Heart right ventricle (tissue), 16 donors: ENCODE measurements at regions of chr10 and their contacts with region 1.

Region 1: GRCh38 chr10:72204296-72204695 is 11.5 kb upstream of the ANAPC16 start:
- DNase-seq: no peak
- ATAC-seq: peak in 1 of 8 donors; percentile 41
- H3K4me3 ChIP-seq: no peak overlapping the region
- H3K27ac ChIP-seq: peak overlapping the region in 1 of 10 donors; percentile 26
- H3K4me1 ChIP-seq: peaks cover 0 to 14% (median 0%) of the 10 kb centered on the region in 9 donors
- H3K27me3 ChIP-seq: no peaks in the 10 kb centered on the region
- CTCF ChIP-seq: no peak

Region 2: GRCh38 chr10:72108830-72109631 is 95.3 kb before region 1 on chr10:
- intact Hi-C with region 1: no loop called
- DNase-seq: no peak
- ATAC-seq: peak in 1 of 8 donors; percentile 28
- H3K4me3 ChIP-seq: no peak overlapping the region
- H3K27ac ChIP-seq: peak overlapping the region in 9 of 10 donors; percentile 51 to 81 (median 74)
- H3K4me1 ChIP-seq: peaks cover 7 to 58% (median 33%) of the 10 kb centered on the region in 9 donors
- H3K27me3 ChIP-seq: no peaks in the 10 kb centered on the region
- CTCF ChIP-seq: no peak

Region 3: GRCh38 chr10:72140174-72140573 is 64.1 kb before region 1 on chr10:
- intact Hi-C with region 1: loop called in 1 of 10 experiments (anchors 5 kb)
- DNase-seq: no peak
- ATAC-seq: no peak
- H3K4me3 ChIP-seq: no peak overlapping the region
- H3K27ac ChIP-seq: no peak overlapping the region
- H3K4me1 ChIP-seq: peaks cover 0 to 14% (median 0%) of the 10 kb centered on the region in 9 donors
- H3K27me3 ChIP-seq: no peaks in the 10 kb centered on the region
- CTCF ChIP-seq: no peak

Region 4: DNA sequence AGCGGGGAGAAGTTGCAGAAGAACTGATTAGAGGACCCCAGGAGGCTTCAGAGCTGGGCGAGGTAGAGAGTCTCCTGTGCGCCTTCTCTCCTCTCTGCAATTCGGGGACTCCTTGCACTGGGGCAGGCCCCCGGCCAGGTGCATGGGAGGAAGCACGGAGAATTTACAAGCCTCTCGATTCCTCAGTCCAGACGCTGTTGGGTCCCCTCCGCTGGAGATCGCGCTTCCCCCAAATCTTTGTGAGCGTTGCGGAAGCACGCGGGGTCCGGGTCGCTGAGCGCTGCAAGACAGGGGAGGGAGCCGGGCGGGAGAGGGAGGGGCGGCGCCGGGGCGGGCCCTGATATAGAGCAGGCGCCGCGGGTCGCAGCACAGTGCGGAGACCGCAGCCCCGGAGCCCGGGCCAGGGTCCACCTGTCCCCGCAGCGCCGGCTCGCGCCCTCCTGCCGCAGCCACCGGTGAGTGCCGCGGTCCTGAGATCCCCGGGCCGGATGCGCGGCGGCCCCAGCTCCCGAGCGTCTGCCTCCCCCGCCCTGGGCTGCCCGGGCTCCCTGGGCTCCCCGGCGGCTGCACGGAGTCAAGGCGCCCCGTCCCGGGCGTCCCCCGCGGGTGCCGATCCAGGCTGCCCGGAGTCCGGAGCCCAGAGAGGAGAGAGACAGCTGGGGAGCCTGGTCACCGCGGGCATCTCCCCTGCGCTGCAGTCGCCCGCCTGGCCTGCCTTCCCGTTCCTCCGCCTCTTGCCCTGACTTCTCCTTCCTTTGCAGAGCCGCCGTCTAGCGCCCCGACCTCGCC is 1706.7 kb after region 1 on chr10 and contains the start of gene PLAU:
- intact Hi-C with region 1: no loop called
- DNase-seq: peak; percentile 61 to 68
- ATAC-seq: peak; percentile 43 to 74 (median 58)
- H3K4me3 ChIP-seq: peak within 1 kb of the TSS; percentile 57 to 92 (median 82)
- H3K27ac ChIP-seq: peak within 1 kb of the TSS; percentile 60 to 95 (median 89)
- H3K4me1 ChIP-seq: peaks cover 5 to 97% (median 56%) of the 10 kb centered on the region in 9 donors
- H3K27me3 ChIP-seq: peaks cover 0 to 14% (median 0%) of the 10 kb centered on the region in 7 donors
- CTCF ChIP-seq: no peak
- total RNA-seq, gene PLAU: 4.4 to 44.3 (median 9.1) TPM